CD8-positive, alpha-beta T cell (primary cell): ENCODE measurements at regions of chr2 and their contacts with region 1.

Region 1: GRCh38 chr2:33104726-33105125 is 158.0 kb downstream of the LTBP1 start:
- DNase-seq: no peak
- ATAC-seq: no peak
- H3K4me3 ChIP-seq: no peak overlapping the region
- H3K4me3 Mint-ChIP-seq: no peak overlapping the region
- H3K27ac ChIP-seq: no peak overlapping the region
- H3K27ac Mint-ChIP-seq: no peak overlapping the region
- H3K4me1 ChIP-seq: no peaks in the 10 kb centered on the region
- H3K4me1 Mint-ChIP-seq: no peaks in the 10 kb centered on the region
- H3K27me3 ChIP-seq: no peaks in the 10 kb centered on the region
- H3K27me3 Mint-ChIP-seq: peaks cover 8% of the 10 kb centered on the region
- CTCF ChIP-seq: no peak

Region 2: GRCh38 chr2:33064349-33064801 is 40.4 kb before region 1 on chr2:
- CTCF ChIA-PET with region 1: no interaction called
- POLR2A ChIA-PET with region 1: no interaction called
- intact Hi-C with region 1: loop called in 1 of 2 experiments (anchors 1 kb)
- DNase-seq: no peak
- ATAC-seq: no peak
- H3K4me3 ChIP-seq: no peak overlapping the region
- H3K4me3 Mint-ChIP-seq: no peak overlapping the region
- H3K27ac ChIP-seq: no peak overlapping the region
- H3K27ac Mint-ChIP-seq: no peak overlapping the region
- H3K4me1 ChIP-seq: no peaks in the 10 kb centered on the region
- H3K4me1 Mint-ChIP-seq: no peaks in the 10 kb centered on the region
- H3K27me3 ChIP-seq: no peaks in the 10 kb centered on the region
- H3K27me3 Mint-ChIP-seq: no peaks in the 10 kb centered on the region
- CTCF ChIP-seq: no peak